Endothelial cell of umbilical vein (primary cell): ENCODE measurements at regions of chr12 and their contacts with region 1.

Region 1: GRCh38 chr12:90327793-90328743 is 619.4 kb upstream of the ATP2B1 start:
- DNase-seq: peak; percentile 89
- H3K4me3 ChIP-seq: no peak overlapping the region
- H3K27ac ChIP-seq: peak overlapping the region; percentile 97
- H3K4me1 ChIP-seq: peaks cover 53% of the 10 kb centered on the region
- H3K27me3 ChIP-seq: no peaks in the 10 kb centered on the region
- CTCF ChIP-seq: no peak
- POLR2A ChIP-seq: no peak

Region 2: DNA sequence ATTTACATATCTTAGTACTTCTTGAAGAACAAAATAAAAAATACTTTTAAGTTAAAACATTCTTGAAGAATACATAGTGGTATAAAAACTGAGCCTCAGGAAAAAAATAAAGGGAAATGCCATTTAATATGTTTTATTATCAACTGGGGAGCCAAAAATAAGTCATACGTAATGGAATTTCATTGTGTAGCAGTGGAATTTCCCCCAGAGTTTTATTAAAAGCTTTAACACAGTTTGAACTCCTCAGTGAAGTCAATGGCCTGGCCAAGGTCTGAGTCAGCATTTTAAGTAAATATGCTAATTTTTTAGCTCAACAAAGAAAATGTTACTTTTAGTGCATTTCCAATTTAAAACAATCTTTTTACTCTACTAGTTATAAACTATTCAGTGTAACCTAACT is 269.4 kb before region 1 on chr12:
- CTCF ChIA-PET with region 1: no interaction called
- POLR2A ChIA-PET with region 1: no interaction called
- dilution Hi-C with region 1: no loop called
- intact Hi-C with region 1: loop called (anchors 5 kb)
- DNase-seq: peak; percentile 90
- H3K4me3 ChIP-seq: no peak overlapping the region
- H3K27ac ChIP-seq: peak overlapping the region; percentile 12
- H3K4me1 ChIP-seq: peaks cover 8% of the 10 kb centered on the region
- H3K27me3 ChIP-seq: no peaks in the 10 kb centered on the region
- CTCF ChIP-seq: no peak
- POLR2A ChIP-seq: no peak

Region 3: GRCh38 chr12:90211017-90211416 is 117.1 kb before region 1 on chr12:
- CTCF ChIA-PET with region 1: no interaction called
- POLR2A ChIA-PET with region 1: no interaction called
- dilution Hi-C with region 1: no loop called
- intact Hi-C with region 1: loop called (anchors 5 kb)
- DNase-seq: peak; percentile 96
- H3K4me3 ChIP-seq: no peak overlapping the region
- H3K27ac ChIP-seq: peak overlapping the region; percentile 85
- H3K4me1 ChIP-seq: peaks cover 16% of the 10 kb centered on the region
- H3K27me3 ChIP-seq: no peaks in the 10 kb centered on the region
- CTCF ChIP-seq: no peak
- POLR2A ChIP-seq: peak; percentile 62

Region 4: DNA sequence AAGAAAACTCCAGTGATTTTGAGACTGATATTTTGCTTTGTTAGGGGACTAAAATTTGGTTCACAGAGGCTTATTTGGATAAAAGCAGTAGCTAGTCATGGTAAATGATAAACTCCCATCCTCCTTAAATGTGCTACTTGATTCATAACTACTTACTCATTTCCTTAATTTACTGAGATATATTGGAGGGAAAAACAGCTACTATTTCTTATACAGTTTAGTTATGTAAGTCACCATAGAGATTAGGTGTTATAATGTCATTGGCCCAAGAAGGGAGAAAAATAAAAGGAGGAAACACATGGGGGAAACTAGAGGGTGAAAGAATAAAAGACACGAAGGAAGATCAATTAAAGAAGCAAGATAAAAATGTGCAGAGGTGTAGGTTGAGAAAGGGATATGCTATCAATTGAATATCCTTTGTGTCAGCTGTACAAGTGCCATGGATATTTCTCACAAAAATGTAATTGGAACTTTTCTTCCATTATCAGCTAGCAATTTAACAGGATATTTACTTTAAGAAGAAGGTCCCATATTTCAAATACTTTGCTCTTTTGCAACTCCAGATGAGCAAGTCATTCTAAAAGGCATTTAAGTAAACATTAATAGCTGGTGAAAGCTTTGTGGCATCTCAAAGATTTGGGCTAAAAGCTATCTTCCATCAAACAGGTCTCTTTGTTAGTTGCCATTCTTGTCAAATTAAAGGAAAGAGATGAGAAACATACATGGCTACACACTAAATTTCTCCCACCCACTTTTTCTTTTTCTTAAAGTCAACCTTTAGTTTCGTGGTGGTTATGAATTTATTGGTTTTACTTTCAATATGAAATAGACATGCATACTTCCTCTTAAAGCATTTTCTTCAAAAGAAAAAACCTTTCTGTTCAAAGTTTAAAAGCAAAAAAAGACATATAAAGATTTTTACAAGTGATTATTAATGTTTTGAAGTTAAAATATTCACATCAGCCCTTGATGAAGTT is 187.4 kb after region 1 on chr12:
- CTCF ChIA-PET with region 1: no interaction called
- POLR2A ChIA-PET with region 1: no interaction called
- dilution Hi-C with region 1: no loop called
- intact Hi-C with region 1: loop called (anchors 10 kb)
- DNase-seq: peak; percentile 86
- H3K4me3 ChIP-seq: no peak overlapping the region
- H3K27ac ChIP-seq: peak overlapping the region; percentile 30
- H3K4me1 ChIP-seq: peaks cover 26% of the 10 kb centered on the region
- H3K27me3 ChIP-seq: no peaks in the 10 kb centered on the region
- CTCF ChIP-seq: no peak
- POLR2A ChIP-seq: no peak

Region 5: DNA sequence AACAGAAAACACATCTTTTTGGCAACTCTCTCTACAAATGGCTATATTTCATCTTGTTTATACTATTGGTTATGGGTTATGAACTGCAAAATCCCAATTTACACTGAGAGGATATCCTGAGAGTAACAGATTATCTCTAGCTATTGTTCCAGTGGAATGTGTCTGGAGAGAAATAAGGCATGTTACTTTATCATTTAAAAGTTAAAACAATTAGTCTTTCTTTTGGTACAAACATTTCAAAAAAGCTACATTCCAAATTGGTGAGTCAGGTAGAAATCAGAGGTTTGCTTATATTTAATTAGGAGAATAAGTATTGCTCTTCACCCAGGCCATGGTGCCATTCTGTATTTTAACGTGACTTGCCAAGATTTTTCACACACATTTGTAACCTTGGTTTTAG is 215.3 kb after region 1 on chr12:
- CTCF ChIA-PET with region 1: no interaction called
- POLR2A ChIA-PET with region 1: no interaction called
- dilution Hi-C with region 1: no loop called
- intact Hi-C with region 1: loop called (anchors 5 kb)
- DNase-seq: peak; percentile 93
- H3K4me3 ChIP-seq: no peak overlapping the region
- H3K27ac ChIP-seq: peak overlapping the region; percentile 97
- H3K4me1 ChIP-seq: peaks cover 18% of the 10 kb centered on the region
- H3K27me3 ChIP-seq: no peaks in the 10 kb centered on the region
- CTCF ChIP-seq: no peak
- POLR2A ChIP-seq: peak; percentile 55